Activated naive CD8-positive, alpha-beta T cell treated with anti-CD3 and anti-CD28 coated beads, Interleukin-2, amount 10 ng/mL, durations not matched to agents 7 days and 5 days (primary cell): ENCODE measurements at regions of chr10 and their contacts with region 1.

Region 1: GRCh38 chr10:80498833-80499741 is 38.6 kb upstream of the SH2D4B start:
- DNase-seq: peak; percentile 54
- ATAC-seq: peak; percentile 67
- H3K4me3 Mint-ChIP-seq: peak overlapping the region; percentile 77
- H3K27ac Mint-ChIP-seq: peak overlapping the region; percentile 91
- H3K4me1 Mint-ChIP-seq: peaks cover 91% of the 10 kb centered on the region
- H3K27me3 Mint-ChIP-seq: no peaks in the 10 kb centered on the region

Region 2: GRCh38 chr10:80382989-80383388 is 116.1 kb before region 1 on chr10:
- POLR2A ChIA-PET with region 1: no interaction called
- DNase-seq: peak; percentile 49
- ATAC-seq: peak; percentile 60
- H3K4me3 Mint-ChIP-seq: peak overlapping the region; percentile 48
- H3K27ac Mint-ChIP-seq: no peak overlapping the region
- H3K4me1 Mint-ChIP-seq: peaks cover 8% of the 10 kb centered on the region
- H3K27me3 Mint-ChIP-seq: peaks cover 12% of the 10 kb centered on the region

Region 3: GRCh38 chr10:80453701-80454513 is 45.2 kb before region 1 on chr10 and contains the start of gene TSPAN14:
- POLR2A ChIA-PET with region 1: interaction called, 34 read pairs
- DNase-seq: peak; percentile 84
- ATAC-seq: peak; percentile 73
- H3K4me3 Mint-ChIP-seq: peak within 1 kb of the TSS; percentile 99
- H3K27ac Mint-ChIP-seq: peak within 1 kb of the TSS; percentile 92
- H3K4me1 Mint-ChIP-seq: peaks cover 28% of the 10 kb centered on the region
- H3K27me3 Mint-ChIP-seq: no peaks in the 10 kb centered on the region
- total RNA-seq, gene TSPAN14: 98.8 to 112 TPM

Region 4: GRCh38 chr10:80459047-80459931 is 39.8 kb before region 1 on chr10:
- POLR2A ChIA-PET with region 1: interaction called, 34 read pairs
- DNase-seq: peak; percentile 70
- ATAC-seq: peak; percentile 57
- H3K4me3 Mint-ChIP-seq: peak overlapping the region; percentile 99
- H3K27ac Mint-ChIP-seq: peak overlapping the region; percentile 93
- H3K4me1 Mint-ChIP-seq: peaks cover 74% of the 10 kb centered on the region
- H3K27me3 Mint-ChIP-seq: no peaks in the 10 kb centered on the region

Region 5: DNA sequence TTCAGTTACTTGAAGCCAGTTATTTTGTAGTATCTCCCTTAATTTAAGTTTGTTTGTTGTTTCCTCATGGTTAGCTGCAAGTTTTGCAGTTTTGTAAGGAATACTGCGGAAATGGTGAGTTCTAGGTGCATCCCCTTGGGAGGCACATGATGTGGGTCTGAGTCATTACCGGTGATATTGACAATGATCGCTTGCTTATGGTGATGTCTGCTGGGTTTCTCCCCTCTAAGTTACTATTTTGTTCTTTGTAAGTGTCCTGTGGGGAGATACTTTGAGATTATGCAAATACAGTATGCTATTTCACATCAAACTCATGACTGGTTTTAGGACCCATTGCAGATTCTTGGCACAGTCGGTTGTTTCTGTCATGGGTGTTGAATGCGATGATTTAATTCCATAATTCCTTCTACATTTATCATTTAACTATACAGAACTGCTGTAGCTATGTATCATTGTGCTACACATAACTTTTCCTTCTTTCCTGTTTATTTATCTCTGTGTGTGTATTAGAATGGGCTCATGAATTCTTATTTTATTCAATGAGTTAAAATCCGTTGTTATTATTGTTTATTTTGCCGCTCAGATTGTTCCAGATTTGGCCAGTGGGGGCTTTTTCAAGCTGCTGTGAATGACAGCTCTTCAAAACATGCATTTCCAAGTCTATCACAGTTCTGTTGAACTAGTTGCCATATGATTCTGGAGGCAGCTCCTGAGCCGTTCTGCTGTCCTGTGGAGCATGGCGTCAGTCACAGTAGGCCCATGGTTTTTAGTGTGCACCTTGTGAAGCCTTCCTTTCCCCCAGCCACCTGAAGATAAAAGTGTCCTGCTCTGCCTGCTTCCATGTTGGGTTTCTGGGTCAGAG is 26.6 kb before region 1 on chr10:
- POLR2A ChIA-PET with region 1: interaction called, 10 read pairs
- DNase-seq: no peak
- ATAC-seq: peak; percentile 59
- H3K4me3 Mint-ChIP-seq: peak overlapping the region; percentile 74
- H3K27ac Mint-ChIP-seq: peak overlapping the region; percentile 90
- H3K4me1 Mint-ChIP-seq: peaks cover 75% of the 10 kb centered on the region
- H3K27me3 Mint-ChIP-seq: no peaks in the 10 kb centered on the region

Region 6: DNA sequence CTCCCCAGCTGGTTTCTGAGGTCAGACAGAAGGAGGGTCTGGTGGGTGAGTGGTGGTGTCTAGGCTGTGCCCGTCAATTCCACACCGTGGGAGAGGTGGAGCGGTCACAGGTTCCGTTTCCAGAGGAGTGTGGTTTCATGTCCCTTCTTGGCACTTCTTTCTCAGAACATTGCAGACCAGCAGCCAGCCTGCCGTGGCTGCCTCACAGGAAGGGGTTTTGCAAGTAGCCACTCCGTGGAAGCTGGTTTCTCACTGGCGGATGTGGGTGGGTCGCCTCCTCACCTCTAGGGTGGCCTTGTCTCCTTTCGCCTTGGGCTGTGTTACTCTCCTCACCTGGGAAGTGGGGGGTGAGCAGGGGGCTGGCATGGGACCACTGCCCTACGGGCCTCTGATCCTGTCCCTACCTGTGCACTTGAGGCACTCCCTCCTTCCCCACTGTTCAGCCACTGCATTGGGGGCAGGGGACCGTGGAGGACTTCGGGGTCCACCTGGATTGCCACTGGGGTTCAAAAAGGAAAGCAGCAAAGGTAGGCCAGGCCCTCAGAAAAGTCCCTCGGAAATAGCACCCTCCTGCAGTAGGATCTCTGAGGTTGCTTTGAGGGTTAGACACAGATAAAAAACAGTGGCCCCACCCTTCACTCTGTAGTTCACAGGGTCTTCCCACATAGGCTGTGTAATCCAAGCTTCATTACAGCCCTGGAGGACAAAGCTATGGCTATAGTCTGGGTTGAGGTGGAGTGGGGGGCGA is 11.1 kb before region 1 on chr10:
- POLR2A ChIA-PET with region 1: interaction called, 38 read pairs
- DNase-seq: peak; percentile 81
- ATAC-seq: peak; percentile 80
- H3K4me3 Mint-ChIP-seq: peak overlapping the region; percentile 80
- H3K27ac Mint-ChIP-seq: peak overlapping the region; percentile 89
- H3K4me1 Mint-ChIP-seq: peaks cover 93% of the 10 kb centered on the region
- H3K27me3 Mint-ChIP-seq: no peaks in the 10 kb centered on the region

Region 7: GRCh38 chr10:80517416-80518134 is 18.5 kb after region 1 on chr10:
- POLR2A ChIA-PET with region 1: no interaction called
- DNase-seq: no peak
- ATAC-seq: no peak
- H3K4me3 Mint-ChIP-seq: no peak overlapping the region
- H3K27ac Mint-ChIP-seq: peak overlapping the region; percentile 51
- H3K4me1 Mint-ChIP-seq: peaks cover 41% of the 10 kb centered on the region
- H3K27me3 Mint-ChIP-seq: no peaks in the 10 kb centered on the region